ENCODE measurements at regions of chr15 and their contacts with region 1.

Region 1: GRCh38 chr15:81265944-81266775 is 57.8 kb downstream of the STARD5 start:
- DNase-seq: peak; percentile 71 to 75 (median 73)
- H3K4me3 ChIP-seq: peak overlapping the region in 1 of 2 donors; percentile 9
- H3K4me3 Mint-ChIP-seq: peak overlapping the region; percentile 66 to 90 (median 79)
- H3K27ac ChIP-seq: no peak overlapping the region
- H3K27ac Mint-ChIP-seq: peak overlapping the region in 5 of 7 donors; percentile 11 to 65 (median 32)
- H3K4me1 ChIP-seq: peaks cover 12% of the 10 kb centered on the region
- H3K4me1 Mint-ChIP-seq: peaks cover 12 to 16% (median 14%) of the 10 kb centered on the region in 4 donors
- H3K27me3 ChIP-seq: no peaks in the 10 kb centered on the region
- H3K27me3 Mint-ChIP-seq: peaks cover 1 to 4% of the 10 kb centered on the region in 2 donors

Region 2: GRCh38 chr15:80970018-80970658 is 296.0 kb before region 1 on chr15:
- CTCF ChIA-PET with region 1: interaction called, 33 read pairs
- POLR2A ChIA-PET with region 1: no interaction called
- intact Hi-C with region 1: no loop called
- DNase-seq: peak; percentile 52 to 65 (median 64)
- H3K4me3 ChIP-seq: no peak overlapping the region
- H3K4me3 Mint-ChIP-seq: no peak overlapping the region
- H3K27ac ChIP-seq: no peak overlapping the region
- H3K27ac Mint-ChIP-seq: peak overlapping the region in 4 of 7 donors; percentile 3 to 68 (median 44)
- H3K4me1 ChIP-seq: peaks cover 3% of the 10 kb centered on the region
- H3K4me1 Mint-ChIP-seq: peaks cover 3 to 21% (median 17%) of the 10 kb centered on the region in 4 donors
- H3K27me3 ChIP-seq: no peaks in the 10 kb centered on the region
- H3K27me3 Mint-ChIP-seq: no peaks in the 10 kb centered on the region

Region 3: DNA sequence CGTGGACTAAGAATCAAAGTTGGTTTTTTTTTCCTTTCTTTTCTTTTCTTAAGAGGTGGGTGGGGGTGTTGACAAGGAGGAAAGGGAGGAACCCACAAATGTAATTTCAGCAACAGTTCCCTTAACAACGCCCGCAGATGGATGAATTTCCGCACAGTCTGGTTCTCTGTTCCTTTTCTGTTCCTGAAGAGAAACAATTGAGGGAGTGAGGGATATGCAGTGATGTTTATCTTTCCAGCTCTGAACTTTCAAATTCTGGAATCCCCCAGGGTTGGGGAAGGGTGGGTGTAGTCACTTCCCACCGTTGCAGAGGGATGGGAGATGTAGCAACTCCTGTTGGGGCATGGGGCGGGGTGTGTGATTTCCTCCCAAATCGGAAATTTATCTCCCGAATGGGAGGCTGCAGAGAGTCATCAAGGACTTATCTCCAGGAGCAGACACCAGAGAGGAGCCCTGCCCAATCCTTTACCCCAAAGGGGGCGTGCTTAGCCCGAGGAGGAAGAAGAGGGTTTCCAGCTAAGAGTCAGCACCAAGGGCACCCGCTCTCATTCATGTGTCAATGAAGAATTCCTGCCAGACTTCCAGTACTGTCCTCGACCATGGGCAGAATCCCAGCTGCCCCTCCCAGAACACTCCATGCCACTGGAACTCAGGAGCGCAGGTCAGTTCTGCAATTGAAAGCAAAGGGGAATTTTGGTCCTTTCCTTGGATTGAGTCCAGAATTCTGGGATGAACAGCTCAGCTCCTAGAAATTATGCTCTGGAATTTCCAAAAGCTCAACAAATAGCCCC is 167.1 kb before region 1 on chr15:
- CTCF ChIA-PET with region 1: interaction called, 131 read pairs
- POLR2A ChIA-PET with region 1: no interaction called
- intact Hi-C with region 1: no loop called
- DNase-seq: no peak
- H3K4me3 ChIP-seq: no peak overlapping the region
- H3K4me3 Mint-ChIP-seq: peak overlapping the region in 1 of 8 donors; percentile 26
- H3K27ac ChIP-seq: no peak overlapping the region
- H3K27ac Mint-ChIP-seq: no peak overlapping the region
- H3K4me1 ChIP-seq: peaks cover 10% of the 10 kb centered on the region
- H3K4me1 Mint-ChIP-seq: peaks cover 0 to 13% (median 5%) of the 10 kb centered on the region in 4 donors
- H3K27me3 ChIP-seq: peaks cover 23% of the 10 kb centered on the region
- H3K27me3 Mint-ChIP-seq: peaks cover 32% of the 10 kb centered on the region in 2 donors

Region 4: GRCh38 chr15:81296673-81297072 is 30.5 kb after region 1 on chr15:
- CTCF ChIA-PET with region 1: interaction called, 107 read pairs
- POLR2A ChIA-PET with region 1: interaction called, 14 read pairs
- intact Hi-C with region 1: no loop called
- DNase-seq: peak; percentile 79 to 89 (median 84)
- H3K4me3 ChIP-seq: peak overlapping the region; percentile 77 to 87
- H3K4me3 Mint-ChIP-seq: peak overlapping the region; percentile 98 to 100 (median 100)
- H3K27ac ChIP-seq: peak overlapping the region; percentile 91
- H3K27ac Mint-ChIP-seq: peak overlapping the region; percentile 96 to 99 (median 98)
- H3K4me1 ChIP-seq: peaks cover 60% of the 10 kb centered on the region
- H3K4me1 Mint-ChIP-seq: peaks cover 48 to 82% (median 55%) of the 10 kb centered on the region in 4 donors
- H3K27me3 ChIP-seq: no peaks in the 10 kb centered on the region
- H3K27me3 Mint-ChIP-seq: no peaks in the 10 kb centered on the region

Region 5: DNA sequence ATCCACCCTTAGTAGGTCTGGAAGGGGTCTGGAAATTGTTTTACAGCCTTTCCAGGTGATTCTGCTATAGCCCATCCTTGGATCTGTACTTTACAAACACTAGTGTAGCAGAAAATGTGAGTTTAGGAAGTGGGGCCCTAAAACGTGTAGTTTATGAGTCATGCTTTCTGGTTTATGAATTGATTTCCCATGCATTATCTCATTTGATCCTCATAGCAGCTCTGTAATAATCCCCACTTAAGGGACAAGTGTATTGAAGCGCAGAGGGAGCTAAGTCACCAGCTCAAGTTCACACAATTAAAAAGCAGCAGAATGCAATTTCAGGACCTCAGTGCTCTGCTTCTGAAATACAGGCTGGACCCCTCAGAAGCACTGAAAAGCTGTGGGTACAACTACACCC is 80.5 kb after region 1 on chr15:
- CTCF ChIA-PET with region 1: interaction called, 16 read pairs
- POLR2A ChIA-PET with region 1: no interaction called
- intact Hi-C with region 1: no loop called
- DNase-seq: no peak
- H3K4me3 ChIP-seq: no peak overlapping the region
- H3K4me3 Mint-ChIP-seq: no peak overlapping the region
- H3K27ac ChIP-seq: no peak overlapping the region
- H3K27ac Mint-ChIP-seq: no peak overlapping the region
- H3K4me1 ChIP-seq: no peaks in the 10 kb centered on the region
- H3K4me1 Mint-ChIP-seq: no peaks in the 10 kb centered on the region
- H3K27me3 ChIP-seq: no peaks in the 10 kb centered on the region
- H3K27me3 Mint-ChIP-seq: peaks cover 1 to 5% of the 10 kb centered on the region in 2 donors

Region 6: GRCh38 chr15:81410318-81410753 is 144.2 kb after region 1 on chr15:
- CTCF ChIA-PET with region 1: interaction called, 50 read pairs
- POLR2A ChIA-PET with region 1: no interaction called
- intact Hi-C with region 1: no loop called
- DNase-seq: peak; percentile 38 to 61 (median 53)
- H3K4me3 ChIP-seq: no peak overlapping the region
- H3K4me3 Mint-ChIP-seq: peak overlapping the region in 1 of 8 donors; percentile 6
- H3K27ac ChIP-seq: no peak overlapping the region
- H3K27ac Mint-ChIP-seq: peak overlapping the region in 1 of 7 donors; percentile 65
- H3K4me1 ChIP-seq: peaks cover 8% of the 10 kb centered on the region
- H3K4me1 Mint-ChIP-seq: peaks cover 0 to 13% (median 11%) of the 10 kb centered on the region in 4 donors
- H3K27me3 ChIP-seq: peaks cover 5% of the 10 kb centered on the region
- H3K27me3 Mint-ChIP-seq: peaks cover 10 to 24% of the 10 kb centered on the region in 2 donors